IMR-90 (cell line): ENCODE measurements at regions of chr14 and their contacts with region 1.

Region 1: GRCh38 chr14:51873221-51873893 is 12.9 kb downstream of the GNG2 start:
- DNase-seq: peak; percentile 98
- ATAC-seq: peak; percentile 89
- H3K4me3 ChIP-seq: no peak overlapping the region
- H3K27ac ChIP-seq: no peak overlapping the region; the same call in 1 of the 2 replicates
- H3K4me1 ChIP-seq: peaks cover 9% of the 10 kb centered on the region
- H3K27me3 ChIP-seq: no peaks in the 10 kb centered on the region
- CTCF ChIP-seq: no peak
- POLR2A ChIP-seq: no peak
- RAD21 ChIP-seq: no peak

Region 2: GRCh38 chr14:51834240-51834639 is 39.1 kb before region 1 on chr14:
- CTCF ChIA-PET with region 1: no interaction called
- POLR2A ChIA-PET with region 1: no interaction called
- dilution Hi-C with region 1: no loop called
- in situ Hi-C with region 1: no loop called
- intact Hi-C with region 1: no loop called
- DNase-seq: no peak
- ATAC-seq: no peak
- H3K4me3 ChIP-seq: no peak overlapping the region
- H3K27ac ChIP-seq: no peak overlapping the region
- H3K4me1 ChIP-seq: no peaks in the 10 kb centered on the region
- H3K27me3 ChIP-seq: no peaks in the 10 kb centered on the region
- CTCF ChIP-seq: no peak
- POLR2A ChIP-seq: no peak
- RAD21 ChIP-seq: no peak

Region 3: DNA sequence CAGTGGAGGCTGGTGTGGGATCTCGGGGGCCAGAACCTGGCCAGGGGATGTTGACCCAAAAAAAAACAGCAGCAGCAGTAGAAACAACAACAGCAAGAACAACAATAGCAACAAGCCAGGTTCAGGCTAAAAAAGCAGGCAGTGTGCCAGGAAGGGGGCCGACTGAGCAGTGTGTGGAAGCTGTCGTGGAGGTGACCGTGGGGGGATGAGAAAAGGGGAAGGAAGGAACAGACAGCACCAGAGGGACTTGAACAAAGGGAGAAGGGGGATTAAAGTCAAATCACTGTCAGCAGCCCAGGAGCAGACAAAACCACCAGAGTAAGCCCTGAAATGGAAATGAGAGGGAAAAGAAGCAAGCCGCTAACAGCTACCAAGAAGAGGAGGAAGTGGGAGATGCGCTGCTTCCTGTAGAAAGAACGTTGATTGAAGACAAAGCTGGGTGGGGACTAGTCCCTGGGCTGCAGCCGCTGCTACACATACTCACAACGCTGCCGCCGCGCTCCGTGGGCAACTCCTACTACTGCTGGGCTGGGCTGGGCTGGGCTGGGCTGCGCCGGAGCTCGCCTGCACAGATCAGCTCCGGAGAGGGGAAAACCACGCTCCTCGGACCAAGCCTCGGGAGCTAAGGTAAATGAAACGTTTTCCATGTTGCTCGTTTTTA is 13.1 kb before region 1 on chr14 and contains the start of gene GNG2:
- CTCF ChIA-PET with region 1: interaction called, 3 read pairs
- POLR2A ChIA-PET with region 1: interaction called, 16 read pairs
- dilution Hi-C with region 1: no loop called
- in situ Hi-C with region 1: no loop called
- intact Hi-C with region 1: no loop called
- DNase-seq: peak; percentile 75
- ATAC-seq: peak; percentile 97
- H3K4me3 ChIP-seq: peak within 1 kb of the TSS; percentile 63
- H3K27ac ChIP-seq: peak within 1 kb of the TSS; percentile 66
- H3K4me1 ChIP-seq: peaks cover 25% of the 10 kb centered on the region
- H3K27me3 ChIP-seq: no peaks in the 10 kb centered on the region
- CTCF ChIP-seq: no peak
- POLR2A ChIP-seq: no peak
- RAD21 ChIP-seq: no peak
- total RNA-seq, gene GNG2: 13.1 and 18.6 TPM in 2 replicates

Region 4: DNA sequence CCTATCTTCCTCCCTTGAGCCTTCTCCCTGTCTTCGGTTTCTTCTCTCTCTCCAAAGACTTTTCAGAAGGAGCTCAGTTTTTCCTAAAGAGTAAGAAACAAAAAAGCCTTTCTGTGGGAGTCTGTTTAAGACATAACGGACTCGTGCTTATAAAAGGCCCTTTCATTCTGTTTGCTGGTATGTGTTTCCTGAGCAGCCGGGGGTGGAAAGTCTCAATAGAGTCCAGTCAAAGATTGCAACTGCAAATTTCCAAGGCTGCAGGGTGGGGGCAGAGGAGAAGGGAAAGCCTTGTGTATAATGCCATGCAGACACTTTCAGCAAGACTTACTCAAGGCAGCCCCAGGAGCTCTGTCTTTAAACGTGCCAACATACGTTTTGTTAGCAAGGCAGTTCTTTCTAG is 49.3 kb after region 1 on chr14:
- CTCF ChIA-PET with region 1: no interaction called
- POLR2A ChIA-PET with region 1: no interaction called
- dilution Hi-C with region 1: no loop called
- in situ Hi-C with region 1: no loop called
- intact Hi-C with region 1: no loop called
- DNase-seq: peak; percentile 63
- ATAC-seq: peak; percentile 96
- H3K4me3 ChIP-seq: no peak overlapping the region; the same call in 1 of the 2 replicates
- H3K27ac ChIP-seq: peak overlapping the region; percentile 41; the same call in 1 of the 2 replicates
- H3K4me1 ChIP-seq: peaks cover 7% of the 10 kb centered on the region
- H3K27me3 ChIP-seq: no peaks in the 10 kb centered on the region
- CTCF ChIP-seq: no peak
- POLR2A ChIP-seq: no peak
- RAD21 ChIP-seq: no peak